ENCODE measurements at regions of chr3 and their contacts with region 1.

Region 1: GRCh38 chr3:70755526-70755925 is 443.1 kb upstream of the MDFIC2 start:
- DNase-seq: no peak
- ATAC-seq: no peak
- H3K4me3 ChIP-seq: no peak overlapping the region
- H3K27ac ChIP-seq: no peak overlapping the region
- H3K4me1 ChIP-seq: no peaks in the 10 kb centered on the region
- H3K27me3 ChIP-seq: peaks cover 0 to 4% (median 0%) of the 10 kb centered on the region in 3 donors
- CTCF ChIP-seq: no peak

Region 2: GRCh38 chr3:69560818-69561217 is 1194.7 kb before region 1 on chr3:
- intact Hi-C with region 1: loop called in 1 of 2 experiments (anchors 5 kb)
- DNase-seq: no peak
- ATAC-seq: no peak
- H3K4me3 ChIP-seq: no peak overlapping the region
- H3K27ac ChIP-seq: no peak overlapping the region
- H3K4me1 ChIP-seq: no peaks in the 10 kb centered on the region
- H3K27me3 ChIP-seq: no peaks in the 10 kb centered on the region
- CTCF ChIP-seq: no peak

Region 3: GRCh38 chr3:70805061-70805759 is 49.7 kb after region 1 on chr3:
- intact Hi-C with region 1: no loop called
- DNase-seq: no peak
- ATAC-seq: no peak
- H3K4me3 ChIP-seq: no peak overlapping the region
- H3K27ac ChIP-seq: no peak overlapping the region
- H3K4me1 ChIP-seq: no peaks in the 10 kb centered on the region
- H3K27me3 ChIP-seq: no peaks in the 10 kb centered on the region
- CTCF ChIP-seq: no peak

Measured in psoas muscle (tissue), 8 donors.